Heart right ventricle (tissue), 16 donors: ENCODE measurements at regions of chr20 and their contacts with region 1.

Region 1: GRCh38 chr20:45771182-45771759 is 20.4 kb downstream of the WFDC3 start:
- DNase-seq: peak; percentile 72 to 79
- ATAC-seq: peak; percentile 62 to 90 (median 80)
- H3K4me3 ChIP-seq: no peak overlapping the region
- H3K27ac ChIP-seq: peak overlapping the region in 4 of 10 donors; percentile 26 to 47 (median 34)
- H3K4me1 ChIP-seq: peaks cover 0 to 13% (median 11%) of the 10 kb centered on the region in 9 donors
- H3K27me3 ChIP-seq: no peaks in the 10 kb centered on the region
- CTCF ChIP-seq: peak; percentile 91 to 98 (median 95)

Region 2: GRCh38 chr20:45322952-45323383 is 448.3 kb before region 1 on chr20:
- intact Hi-C with region 1: loop called in 9 of 10 experiments (anchors 1 to 5 kb)
- DNase-seq: peak in 1 of 2 donors; percentile 62
- ATAC-seq: peak; percentile 68 to 85 (median 80)
- H3K4me3 ChIP-seq: no peak overlapping the region
- H3K27ac ChIP-seq: no peak overlapping the region
- H3K4me1 ChIP-seq: peaks cover 0 to 15% (median 0%) of the 10 kb centered on the region in 9 donors
- H3K27me3 ChIP-seq: peaks cover 0 to 3% (median 0%) of the 10 kb centered on the region in 7 donors
- CTCF ChIP-seq: peak in 8 of 9 donors; percentile 12 to 63 (median 48)

Region 3: GRCh38 chr20:45450097-45450818 is 321.0 kb before region 1 on chr20:
- intact Hi-C with region 1: loop called in 7 of 10 experiments (anchors 5 to 10 kb)
- DNase-seq: no peak
- ATAC-seq: peak in 4 of 8 donors; percentile 25 to 52 (median 35)
- H3K4me3 ChIP-seq: no peak overlapping the region
- H3K27ac ChIP-seq: peak overlapping the region in 2 of 10 donors; percentile 13 to 25
- H3K4me1 ChIP-seq: no peaks in the 10 kb centered on the region
- H3K27me3 ChIP-seq: peaks cover 0 to 11% (median 0%) of the 10 kb centered on the region in 7 donors
- CTCF ChIP-seq: peak; percentile 34 to 70 (median 60)

Region 4: GRCh38 chr20:45469336-45470261 is 301.7 kb before region 1 on chr20 and contains the start of gene WFDC2:
- intact Hi-C with region 1: loop called in 1 of 10 experiments (anchors 10 kb)
- DNase-seq: peak in 1 of 2 donors; percentile 13
- ATAC-seq: peak in 7 of 8 donors; percentile 9 to 47 (median 35)
- H3K4me3 ChIP-seq: peak within 1 kb of the TSS; percentile 23 to 61 (median 52)
- H3K27ac ChIP-seq: peak within 1 kb of the TSS in 2 of 10 donors; percentile 31 to 34
- H3K4me1 ChIP-seq: peaks cover 0 to 23% (median 19%) of the 10 kb centered on the region in 9 donors
- H3K27me3 ChIP-seq: peaks cover 0 to 83% (median 72%) of the 10 kb centered on the region in 7 donors
- CTCF ChIP-seq: no peak
- total RNA-seq, gene WFDC2: 0.44 to 1.6 (median 0.53) TPM in 4 of 10 donors, not detected in the others